ENCODE measurements at regions of chr16 and their contacts with region 1.

Region 1: DNA sequence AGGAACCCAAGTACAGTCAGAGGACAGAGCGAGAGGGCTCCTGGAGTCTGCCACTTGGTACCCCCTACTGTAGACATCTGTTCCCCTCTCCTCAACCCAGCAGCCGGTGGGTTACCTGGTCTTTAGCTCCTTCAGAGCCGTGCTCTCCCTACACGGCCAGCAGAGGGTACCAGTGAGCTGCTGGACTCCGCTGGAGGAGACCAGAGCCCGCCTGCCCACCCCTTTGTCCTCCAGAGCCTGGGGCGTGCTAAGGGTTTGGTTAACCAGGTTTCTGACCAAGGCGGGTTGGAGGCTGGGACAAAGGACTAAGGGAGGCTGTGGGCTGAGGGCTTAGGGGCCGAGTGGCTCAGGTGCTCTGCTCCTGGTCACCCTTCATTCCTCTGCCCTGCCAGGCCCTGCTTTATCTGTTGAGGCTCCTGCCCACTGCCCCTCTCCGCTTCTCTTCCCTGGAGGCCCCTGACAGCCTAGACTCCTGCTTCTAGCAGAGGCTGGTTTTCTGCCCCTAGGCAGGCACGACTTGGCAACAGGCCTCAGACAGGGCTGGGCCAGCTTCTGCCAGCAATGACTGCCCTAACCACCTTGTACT is 2.7 kb upstream of the HSD11B2 start:
- DNase-seq: peak in 4 of 9 donors; percentile 31 to 71 (median 42)
- ATAC-seq: peak; percentile 72
- H3K4me3 ChIP-seq: no peak overlapping the region
- H3K4me3 Mint-ChIP-seq: no peak overlapping the region
- H3K27ac ChIP-seq: no peak overlapping the region
- H3K27ac Mint-ChIP-seq: no peak overlapping the region
- H3K4me1 ChIP-seq: peaks cover 0 to 5% of the 10 kb centered on the region in 2 donors
- H3K4me1 Mint-ChIP-seq: peaks cover 0 to 12% (median 4%) of the 10 kb centered on the region in 7 donors
- H3K27me3 ChIP-seq: peaks cover 5 to 12% of the 10 kb centered on the region in 2 donors
- H3K27me3 Mint-ChIP-seq: peaks cover 26 to 58% (median 35%) of the 10 kb centered on the region in 5 donors

Region 2: DNA sequence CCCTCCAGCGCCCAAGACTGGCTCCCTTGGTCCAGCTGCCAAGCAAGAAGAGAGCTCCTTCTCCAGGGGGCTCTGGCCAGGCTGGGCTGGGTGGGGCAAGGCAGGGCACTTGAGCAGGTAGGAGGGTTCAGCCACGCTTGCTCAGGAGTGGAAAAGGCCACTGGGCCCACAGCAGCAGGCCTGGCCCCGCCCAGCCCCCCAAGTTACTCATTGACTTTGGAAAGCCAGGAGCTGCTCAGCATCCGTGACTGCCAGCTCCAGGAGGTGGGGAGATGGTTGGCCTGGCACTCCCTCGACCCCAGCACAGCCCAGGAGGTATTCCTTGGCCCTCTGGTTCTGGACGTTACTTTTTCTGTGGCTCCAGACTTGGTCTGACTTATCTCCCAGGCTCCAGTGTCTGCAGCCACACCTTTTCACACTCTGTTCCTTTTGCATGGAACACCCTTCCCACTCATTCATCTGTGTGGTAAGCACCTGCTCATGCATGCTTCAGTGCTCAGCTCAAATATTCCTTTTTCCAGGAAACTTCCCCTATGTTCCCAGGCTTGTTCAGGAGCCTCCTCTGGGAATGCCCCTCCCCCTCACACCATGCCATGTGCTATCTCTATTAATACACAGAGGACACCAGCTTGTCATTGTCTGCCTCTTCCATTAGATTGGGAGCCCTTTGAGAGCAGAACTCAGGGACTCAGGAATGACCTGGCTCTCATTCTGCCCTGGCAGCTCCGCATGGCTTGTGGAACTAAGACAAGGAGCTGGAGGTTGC is 509.3 kb before region 1 on chr16 and contains the start of gene CDH16:
- CTCF ChIA-PET with region 1: no interaction called
- POLR2A ChIA-PET with region 1: no interaction called
- intact Hi-C with region 1: no loop called
- DNase-seq: no peak
- ATAC-seq: no peak
- H3K4me3 ChIP-seq: no peak within 1 kb of the TSS
- H3K4me3 Mint-ChIP-seq: no peak within 1 kb of the TSS
- H3K27ac ChIP-seq: no peak within 1 kb of the TSS
- H3K27ac Mint-ChIP-seq: no peak within 1 kb of the TSS
- H3K4me1 ChIP-seq: no peaks in the 10 kb centered on the region
- H3K4me1 Mint-ChIP-seq: peaks cover 0 to 4% (median 0%) of the 10 kb centered on the region in 7 donors
- H3K27me3 ChIP-seq: peaks cover 0 to 3% of the 10 kb centered on the region in 2 donors
- H3K27me3 Mint-ChIP-seq: peaks cover 10 to 24% (median 18%) of the 10 kb centered on the region in 5 donors
- total RNA-seq, gene CDH16: not detected

Region 3: GRCh38 chr16:67470359-67470758 is 42.1 kb after region 1 on chr16:
- CTCF ChIA-PET with region 1: no interaction called
- POLR2A ChIA-PET with region 1: no interaction called
- intact Hi-C with region 1: loop called (anchors 1 kb)
- DNase-seq: no peak
- ATAC-seq: no peak
- H3K4me3 ChIP-seq: no peak overlapping the region
- H3K4me3 Mint-ChIP-seq: no peak overlapping the region
- H3K27ac ChIP-seq: no peak overlapping the region
- H3K27ac Mint-ChIP-seq: no peak overlapping the region
- H3K4me1 ChIP-seq: peaks cover 0 to 13% of the 10 kb centered on the region in 2 donors
- H3K4me1 Mint-ChIP-seq: peaks cover 10 to 70% (median 54%) of the 10 kb centered on the region in 7 donors
- H3K27me3 ChIP-seq: no peaks in the 10 kb centered on the region
- H3K27me3 Mint-ChIP-seq: no peaks in the 10 kb centered on the region

Measured in naive thymus-derived CD4-positive, alpha-beta T cell (primary cell).